ENCODE measurements at regions of chr15 and their contacts with region 1.

Region 1: DNA sequence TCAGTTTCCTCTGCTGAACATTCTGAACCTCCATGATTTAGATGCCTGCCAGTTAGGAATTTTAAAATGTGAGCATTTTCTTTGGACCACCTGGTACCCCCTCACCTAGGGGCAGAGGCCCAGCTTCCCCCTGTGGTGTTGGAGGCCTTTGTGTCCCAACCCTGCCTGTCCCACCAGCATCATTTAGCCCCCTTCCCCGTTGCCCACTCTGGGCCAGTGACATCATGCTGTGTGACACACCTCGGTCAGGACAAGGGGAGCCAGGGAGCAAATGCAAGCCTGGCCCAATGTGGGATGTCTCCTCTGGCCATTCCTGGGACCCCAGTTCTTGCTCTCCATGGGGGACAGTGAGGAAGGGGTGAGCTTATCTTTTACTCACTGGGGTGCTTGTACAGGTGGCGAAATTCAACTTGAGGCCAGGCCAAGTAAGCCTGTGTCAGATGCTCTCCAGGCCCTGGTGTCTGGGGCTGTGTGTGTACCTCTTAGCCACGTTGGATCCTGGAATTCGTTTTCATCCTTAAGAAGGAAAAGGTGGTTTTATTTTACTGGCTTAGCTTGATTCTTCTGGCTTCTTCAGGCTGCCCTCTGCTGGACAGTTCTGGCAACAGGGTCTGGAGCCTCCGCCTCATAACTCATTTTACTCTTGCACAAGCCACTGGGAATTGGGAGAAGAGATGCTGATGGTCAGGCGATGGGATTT is 49.7 kb upstream of the MYZAP start:
- DNase-seq: peak; percentile 42
- ATAC-seq: no peak
- H3K4me3 Mint-ChIP-seq: no peak overlapping the region
- H3K27ac Mint-ChIP-seq: no peak overlapping the region
- H3K4me1 Mint-ChIP-seq: no peaks in the 10 kb centered on the region
- H3K27me3 Mint-ChIP-seq: no peaks in the 10 kb centered on the region

Region 2: GRCh38 chr15:57340682-57341259 is 201.2 kb before region 1 on chr15:
- CTCF ChIA-PET with region 1: interaction called, 20 read pairs
- POLR2A ChIA-PET with region 1: no interaction called
- DNase-seq: peak; percentile 52
- ATAC-seq: peak; percentile 65
- H3K4me3 Mint-ChIP-seq: no peak overlapping the region
- H3K27ac Mint-ChIP-seq: no peak overlapping the region
- H3K4me1 Mint-ChIP-seq: no peaks in the 10 kb centered on the region
- H3K27me3 Mint-ChIP-seq: peaks cover 2% of the 10 kb centered on the region

Region 3: GRCh38 chr15:57505949-57506391 is 36.0 kb before region 1 on chr15:
- CTCF ChIA-PET with region 1: no interaction called
- POLR2A ChIA-PET with region 1: no interaction called
- DNase-seq: peak; percentile 1
- ATAC-seq: no peak
- H3K4me3 Mint-ChIP-seq: no peak overlapping the region
- H3K27ac Mint-ChIP-seq: no peak overlapping the region
- H3K4me1 Mint-ChIP-seq: no peaks in the 10 kb centered on the region
- H3K27me3 Mint-ChIP-seq: no peaks in the 10 kb centered on the region

Region 4: DNA sequence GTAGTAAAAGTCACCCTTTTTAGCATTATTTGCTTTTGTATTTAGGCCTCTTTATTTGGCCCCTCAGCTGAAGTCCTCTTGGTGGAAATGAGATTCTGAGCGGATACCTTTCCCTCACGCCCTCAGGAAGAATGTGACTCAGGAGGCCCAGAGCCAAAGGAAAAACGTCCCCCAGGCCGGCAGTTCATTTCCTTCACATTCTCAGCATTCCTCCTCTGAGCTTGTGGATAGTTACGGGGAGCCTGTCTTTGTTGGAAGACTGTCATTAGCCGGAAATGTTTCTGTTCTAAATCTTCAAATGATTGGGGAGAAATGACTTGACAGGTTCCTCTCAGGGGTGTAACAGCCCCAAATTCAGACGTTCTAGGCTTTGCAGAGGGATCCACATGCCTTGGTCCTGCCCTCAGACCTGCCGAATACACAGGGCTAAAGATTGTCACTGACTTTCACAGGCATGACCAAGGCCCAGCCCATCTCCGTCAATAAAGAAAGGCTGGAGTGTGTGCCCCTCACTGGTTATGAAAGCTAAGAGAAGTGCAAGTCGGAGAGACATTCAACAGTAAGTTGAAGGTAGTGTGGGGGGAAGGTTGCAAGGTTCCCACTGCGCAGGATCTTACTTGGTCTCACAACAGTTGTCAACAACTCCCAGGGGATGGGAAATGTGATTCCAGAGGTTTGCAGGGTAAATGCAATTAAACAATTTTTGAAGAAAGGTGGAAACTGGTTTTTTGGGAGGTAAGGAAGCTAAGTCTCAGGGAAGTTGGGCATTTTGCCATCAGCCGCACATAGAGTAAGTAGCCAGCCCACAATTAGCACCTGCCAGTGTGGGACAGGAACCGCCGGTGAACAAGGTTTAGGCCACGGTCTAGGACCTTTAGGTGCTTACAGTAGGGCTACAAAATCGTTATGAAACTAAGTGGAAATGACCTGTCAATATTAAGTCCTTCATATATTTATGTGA is 10.0 kb after region 1 on chr15:
- CTCF ChIA-PET with region 1: interaction called, 14 read pairs
- POLR2A ChIA-PET with region 1: no interaction called
- DNase-seq: no peak
- ATAC-seq: no peak
- H3K4me3 Mint-ChIP-seq: no peak overlapping the region
- H3K27ac Mint-ChIP-seq: no peak overlapping the region
- H3K4me1 Mint-ChIP-seq: no peaks in the 10 kb centered on the region
- H3K27me3 Mint-ChIP-seq: peaks cover 2% of the 10 kb centered on the region

Region 5: GRCh38 chr15:57561041-57561711 is 19.2 kb after region 1 on chr15:
- CTCF ChIA-PET with region 1: interaction called, 14 read pairs
- POLR2A ChIA-PET with region 1: no interaction called
- DNase-seq: peak; percentile 74
- ATAC-seq: peak; percentile 84
- H3K4me3 Mint-ChIP-seq: no peak overlapping the region
- H3K27ac Mint-ChIP-seq: no peak overlapping the region
- H3K4me1 Mint-ChIP-seq: peaks cover 34% of the 10 kb centered on the region
- H3K27me3 Mint-ChIP-seq: peaks cover 13% of the 10 kb centered on the region